Esophagus muscularis mucosa (tissue), 4 donors: ENCODE measurements at regions of chr5 and their contacts with region 1.

Region 1: GRCh38 chr5:173972925-173973615 is 15.9 kb upstream of the C5orf47 start:
- DNase-seq: peak; percentile 97
- H3K4me3 ChIP-seq: peak overlapping the region; percentile 50 to 65 (median 52)
- H3K27ac ChIP-seq: peak overlapping the region in 2 of 4 donors; percentile 12 to 57
- H3K4me1 ChIP-seq: peaks cover 11 to 18% (median 14%) of the 10 kb centered on the region in 4 donors
- H3K27me3 ChIP-seq: no peaks in the 10 kb centered on the region
- CTCF ChIP-seq: peak; percentile 86 to 89 (median 88)
- EP300 ChIP-seq: no peak
- POLR2A ChIP-seq: no peak

Region 2: DNA sequence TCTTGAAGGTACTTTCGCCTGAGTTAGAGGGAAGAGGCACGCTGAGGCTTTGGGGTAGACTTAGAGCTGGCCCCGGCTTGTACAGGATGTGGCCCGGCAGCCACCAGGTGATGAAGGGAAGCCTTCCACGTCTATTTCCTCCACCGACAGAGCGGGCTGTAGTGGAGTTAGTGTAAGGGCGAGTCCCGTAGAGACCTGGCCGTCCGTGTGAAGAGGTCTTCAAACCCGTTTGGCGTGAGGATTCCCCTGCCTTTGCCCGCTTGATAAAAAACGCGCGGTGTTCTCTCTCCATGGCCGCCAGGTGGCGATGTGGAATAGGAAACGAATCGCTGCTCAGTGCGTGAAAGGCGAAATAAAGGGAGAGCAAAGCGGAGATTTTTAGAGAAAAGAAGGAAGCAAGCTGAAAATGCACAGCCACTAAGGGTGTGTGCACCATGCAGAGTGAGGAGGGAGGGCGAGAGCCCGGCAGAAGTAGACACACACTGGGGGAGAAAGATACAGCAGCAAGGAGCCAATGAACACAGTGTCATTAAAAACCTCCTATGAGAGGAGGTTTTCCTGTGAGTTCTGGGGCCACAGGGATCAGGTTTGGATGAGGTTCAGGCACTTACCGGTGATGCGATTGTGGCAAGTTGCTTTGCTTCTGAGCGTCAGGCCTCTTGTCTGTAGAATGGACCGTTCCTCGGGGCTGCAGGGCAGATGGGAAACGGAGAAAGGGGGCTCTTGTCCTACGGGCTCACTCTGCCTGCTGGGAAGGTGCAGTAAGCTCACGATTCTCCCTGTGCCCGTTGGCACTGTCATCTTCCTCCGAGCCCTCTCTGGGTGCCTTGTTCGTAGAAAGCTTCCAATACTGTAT is 679.0 kb before region 1 on chr5:
- intact Hi-C with region 1: loop called (anchors 10 kb)
- DNase-seq: no peak
- H3K4me3 ChIP-seq: peak overlapping the region in 2 of 4 donors; percentile 22 to 25
- H3K27ac ChIP-seq: no peak overlapping the region
- H3K4me1 ChIP-seq: peaks cover 12 to 20% (median 19%) of the 10 kb centered on the region in 4 donors
- H3K27me3 ChIP-seq: peaks cover 0 to 9% (median 0%) of the 10 kb centered on the region in 4 donors
- CTCF ChIP-seq: peak; percentile 86 to 88 (median 87)
- EP300 ChIP-seq: no peak
- POLR2A ChIP-seq: no peak

Region 3: DNA sequence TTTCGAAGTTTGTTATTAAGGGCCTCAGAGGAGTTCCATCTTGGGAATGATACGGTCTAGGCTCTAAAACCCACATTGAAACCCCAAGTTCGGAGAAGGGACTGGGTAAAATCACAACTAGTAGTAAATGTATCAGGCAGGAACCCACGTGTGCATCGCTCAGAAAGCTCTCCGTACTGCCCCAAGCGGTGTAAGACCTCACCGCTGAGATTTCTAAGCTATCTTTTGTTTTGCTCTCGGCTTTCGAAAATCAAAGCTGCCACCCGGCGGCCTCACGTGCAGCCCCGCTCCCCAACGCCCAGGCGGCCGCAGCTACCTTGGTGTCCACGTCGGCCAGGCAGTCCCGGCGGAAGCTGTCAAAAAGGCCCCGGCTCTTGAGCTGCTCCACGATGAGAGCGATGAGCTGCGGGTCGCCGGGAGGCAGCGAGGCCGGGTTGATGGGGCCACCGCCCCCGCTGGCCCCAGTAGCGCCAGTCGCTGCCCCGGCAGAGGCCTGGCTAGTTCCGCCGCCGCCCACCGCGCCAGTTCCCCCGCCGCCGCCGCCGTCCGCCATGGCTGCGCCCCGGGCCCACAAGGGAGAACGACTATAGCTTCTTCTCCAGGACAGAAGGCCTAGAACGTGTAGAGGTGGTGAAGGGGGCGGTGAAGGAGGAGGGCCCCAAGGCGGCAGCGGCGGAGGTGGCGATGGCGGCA is 357.0 kb before region 1 on chr5:
- intact Hi-C with region 1: loop called (anchors 1 kb)
- DNase-seq: peak; percentile 92
- H3K4me3 ChIP-seq: peak overlapping the region; percentile 76 to 99 (median 92)
- H3K27ac ChIP-seq: peak overlapping the region; percentile 94 to 98 (median 96)
- H3K4me1 ChIP-seq: peaks cover 22 to 54% (median 47%) of the 10 kb centered on the region in 4 donors
- H3K27me3 ChIP-seq: no peaks in the 10 kb centered on the region
- CTCF ChIP-seq: peak; percentile 59 to 72 (median 63)
- EP300 ChIP-seq: no peak
- POLR2A ChIP-seq: no peak

Region 4: DNA sequence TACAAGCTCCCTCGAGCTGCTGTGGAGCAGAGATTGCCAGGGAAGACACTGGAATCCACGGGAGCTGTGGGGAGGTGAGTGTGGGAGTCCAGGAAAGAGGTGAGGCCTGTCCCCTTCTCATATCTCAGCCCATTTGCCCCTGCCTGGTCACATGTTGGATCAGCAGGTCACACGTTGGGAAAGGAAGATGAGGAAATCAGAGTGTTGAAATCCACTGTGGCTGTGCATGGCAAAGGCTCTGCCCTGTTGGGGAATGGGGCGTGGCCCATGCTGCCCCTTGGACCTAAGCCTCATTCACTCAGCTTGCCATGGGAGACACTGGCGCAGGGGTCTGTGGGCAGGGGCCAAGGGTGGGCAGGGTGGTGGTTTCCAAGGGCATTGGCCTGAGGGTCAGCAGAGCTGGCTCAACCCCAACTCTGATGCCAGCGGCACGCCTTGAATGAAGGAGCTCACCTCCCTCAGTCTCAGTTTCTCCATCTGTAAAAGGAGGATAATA is 170.4 kb before region 1 on chr5:
- intact Hi-C with region 1: no loop called
- DNase-seq: no peak
- H3K4me3 ChIP-seq: no peak overlapping the region
- H3K27ac ChIP-seq: no peak overlapping the region
- H3K4me1 ChIP-seq: no peaks in the 10 kb centered on the region
- H3K27me3 ChIP-seq: peaks cover 0 to 3% (median 0%) of the 10 kb centered on the region in 4 donors
- CTCF ChIP-seq: no peak
- EP300 ChIP-seq: no peak
- POLR2A ChIP-seq: no peak

Region 5: GRCh38 chr5:173887610-173888472 is 85.2 kb before region 1 on chr5 and contains the start of gene CPEB4:
- intact Hi-C with region 1: loop called (anchors 5 kb)
- DNase-seq: peak; percentile 100
- H3K4me3 ChIP-seq: peak within 1 kb of the TSS; percentile 66 to 92 (median 86)
- H3K27ac ChIP-seq: peak within 1 kb of the TSS; percentile 82 to 95 (median 88)
- H3K4me1 ChIP-seq: peaks cover 9 to 40% (median 32%) of the 10 kb centered on the region in 4 donors
- H3K27me3 ChIP-seq: no peaks in the 10 kb centered on the region
- CTCF ChIP-seq: no peak
- EP300 ChIP-seq: no peak
- POLR2A ChIP-seq: peak; percentile 97
- total RNA-seq, gene CPEB4: 44.9 to 96.4 (median 54.4) TPM

Region 6: GRCh38 chr5:173903396-173904140 is 69.5 kb before region 1 on chr5:
- intact Hi-C with region 1: no loop called
- DNase-seq: no peak
- H3K4me3 ChIP-seq: no peak overlapping the region
- H3K27ac ChIP-seq: peak overlapping the region; percentile 11 to 52 (median 26)
- H3K4me1 ChIP-seq: peaks cover 44 to 88% (median 68%) of the 10 kb centered on the region in 4 donors
- H3K27me3 ChIP-seq: no peaks in the 10 kb centered on the region
- CTCF ChIP-seq: no peak
- EP300 ChIP-seq: no peak
- POLR2A ChIP-seq: no peak

Region 7: GRCh38 chr5:174311531-174312269 is 338.6 kb after region 1 on chr5:
- intact Hi-C with region 1: loop called (anchors 10 kb)
- DNase-seq: no peak
- H3K4me3 ChIP-seq: peak overlapping the region; percentile 47 to 64 (median 54)
- H3K27ac ChIP-seq: no peak overlapping the region
- H3K4me1 ChIP-seq: peaks cover 5 to 12% (median 11%) of the 10 kb centered on the region in 4 donors
- H3K27me3 ChIP-seq: peaks cover 0 to 56% (median 0%) of the 10 kb centered on the region in 4 donors
- CTCF ChIP-seq: peak; percentile 71 to 93 (median 92)
- EP300 ChIP-seq: no peak
- POLR2A ChIP-seq: no peak